Posterior cingulate gyrus (tissue), 11 donors: ENCODE measurements at regions of chr16 and their contacts with region 1.

Region 1: GRCh38 chr16:29926005-29926710 is at the start of gene KCTD13:
- DNase-seq: peak; percentile 76 to 97 (median 81)

Region 2: GRCh38 chr16:29900102-29900887 is 25.9 kb before region 1 on chr16 and contains the start of gene ASPHD1:
- intact Hi-C with region 1: loop called (anchors 2 kb)
- DNase-seq: peak; percentile 74 to 98 (median 87)

Region 3: GRCh38 chr16:29961479-29962343 is 35.6 kb after region 1 on chr16 and contains the start of gene TMEM219:
- intact Hi-C with region 1: loop called (anchors 5 kb)
- DNase-seq: peak; percentile 82 to 99 (median 90)

Region 4: GRCh38 chr16:29983420-29984136 is 57.4 kb after region 1 on chr16:
- intact Hi-C with region 1: no loop called
- DNase-seq: peak in 3 of 10 donors; percentile 28 to 46 (median 30)

Region 5: GRCh38 chr16:31010585-31011325 is 1084.6 kb after region 1 on chr16 and contains the start of gene STX1B:
- intact Hi-C with region 1: no loop called
- DNase-seq: peak; percentile 50 to 96 (median 81)